Caco-2 (cell line): ENCODE measurements at regions of chr9 and their contacts with region 1.

Region 1: GRCh38 chr9:137029058-137029936 is 1.3 kb upstream of the ABCA2 start:
- DNase-seq: peak; percentile 85 to 90
- H3K4me3 ChIP-seq: peak overlapping the region; percentile 75
- H3K4me3 Mint-ChIP-seq: peak overlapping the region; percentile 74
- H3K27ac Mint-ChIP-seq: peak overlapping the region; percentile 42
- H3K4me1 ChIP-seq: peaks cover 14% of the 10 kb centered on the region
- H3K4me1 Mint-ChIP-seq: no peaks in the 10 kb centered on the region
- H3K27me3 ChIP-seq: no peaks in the 10 kb centered on the region
- H3K27me3 Mint-ChIP-seq: no peaks in the 10 kb centered on the region
- CTCF ChIP-seq: peak; percentile 86 to 97

Region 2: DNA sequence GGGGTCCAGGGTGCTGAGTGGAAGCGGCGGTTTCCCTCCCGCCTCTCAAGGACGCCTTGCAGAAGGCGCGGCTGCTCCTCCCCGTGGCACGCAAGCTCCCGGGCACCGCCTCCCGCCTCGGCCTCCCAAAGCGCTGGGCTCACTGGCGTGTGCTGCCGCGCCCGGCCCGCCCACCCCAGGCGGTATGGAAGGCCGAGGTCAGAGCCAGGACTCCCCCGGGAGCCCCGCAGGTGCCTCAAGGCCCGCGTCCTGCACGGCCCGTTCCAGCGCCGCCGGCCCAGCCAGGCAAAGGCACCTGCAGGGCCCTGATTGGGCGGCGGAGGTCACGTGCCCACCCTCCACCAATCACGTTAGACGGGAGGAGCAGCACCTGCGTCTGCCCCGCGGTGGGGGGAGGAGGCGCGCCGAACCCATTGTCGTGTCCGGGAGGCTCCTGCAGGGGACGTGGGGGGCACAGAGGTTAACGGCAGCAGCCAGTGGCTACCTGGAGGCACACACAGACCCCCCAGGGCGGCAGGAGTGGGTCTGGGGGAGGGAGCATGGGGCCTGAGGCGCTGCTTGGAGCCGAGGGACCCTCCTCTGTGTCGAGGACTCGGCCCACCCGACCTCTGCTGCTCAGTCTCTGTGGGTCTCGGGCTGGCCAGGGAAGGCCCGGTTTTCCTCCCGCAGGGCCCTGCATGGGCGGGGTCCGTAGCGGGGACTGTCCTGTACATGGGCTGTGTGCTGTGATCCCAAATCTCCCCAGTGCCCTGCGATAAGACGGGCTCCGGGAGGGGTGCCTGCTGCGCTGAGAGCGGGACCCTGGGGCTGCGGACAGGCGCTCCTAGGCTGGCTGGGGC is 79.3 kb before region 1 on chr9:
- CTCF ChIA-PET with region 1: interaction called, 42 read pairs
- POLR2A ChIA-PET with region 1: no interaction called
- intact Hi-C with region 1: loop called (anchors 2 kb)
- DNase-seq: peak; percentile 99
- H3K4me3 ChIP-seq: peak overlapping the region; percentile 60
- H3K4me3 Mint-ChIP-seq: peak overlapping the region; percentile 76
- H3K27ac Mint-ChIP-seq: peak overlapping the region; percentile 94
- H3K4me1 ChIP-seq: peaks cover 41% of the 10 kb centered on the region
- H3K4me1 Mint-ChIP-seq: no peaks in the 10 kb centered on the region
- H3K27me3 ChIP-seq: no peaks in the 10 kb centered on the region
- H3K27me3 Mint-ChIP-seq: no peaks in the 10 kb centered on the region
- CTCF ChIP-seq: peak; percentile 15 to 41

Region 3: DNA sequence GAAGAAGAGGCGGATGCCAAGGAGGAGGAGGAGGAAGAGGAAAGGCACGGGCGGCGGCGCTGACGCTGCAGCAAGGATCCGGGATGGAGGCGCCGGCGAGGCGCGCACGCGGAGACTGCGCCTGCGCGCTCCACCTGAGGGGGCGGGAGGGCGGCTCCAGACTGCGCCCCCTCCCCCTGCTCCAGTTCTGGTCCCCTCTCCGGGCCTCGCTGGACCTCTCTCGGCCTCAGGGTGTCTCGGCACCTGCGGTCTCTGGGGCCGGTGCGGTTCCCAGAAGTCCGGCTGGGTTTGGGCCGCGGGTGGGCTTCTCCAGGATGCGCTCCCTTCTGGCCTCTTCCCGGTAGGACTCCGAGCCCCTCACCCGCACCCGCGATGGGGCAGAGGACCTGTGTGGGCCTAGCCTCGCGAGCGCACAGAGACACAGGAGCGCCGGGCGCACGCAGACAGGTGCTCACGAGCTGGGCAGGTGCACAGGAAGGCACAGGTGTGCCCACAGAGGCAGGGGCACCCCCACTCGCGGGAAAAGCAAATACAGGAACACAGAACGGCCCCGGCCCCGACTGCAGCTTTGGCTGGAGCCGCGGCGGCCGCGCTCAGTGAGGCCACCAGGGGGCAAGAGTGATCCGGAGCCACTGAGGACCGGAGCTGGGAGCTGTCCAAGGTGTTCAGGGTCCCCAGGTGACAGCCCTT is 16.9 kb after region 1 on chr9 and contains the start of gene NPDC1:
- CTCF ChIA-PET with region 1: interaction called, 21 read pairs
- POLR2A ChIA-PET with region 1: no interaction called
- intact Hi-C with region 1: no loop called
- DNase-seq: peak; percentile 89 to 95
- H3K4me3 ChIP-seq: peak within 1 kb of the TSS; percentile 63
- H3K4me3 Mint-ChIP-seq: peak within 1 kb of the TSS; percentile 79
- H3K27ac Mint-ChIP-seq: no peak within 1 kb of the TSS
- H3K4me1 ChIP-seq: 0 out of 2 replicates have a peak, but pooled peaks cover 5% of the 10 kb centered on the region
- H3K4me1 Mint-ChIP-seq: no peaks in the 10 kb centered on the region
- H3K27me3 ChIP-seq: no peaks in the 10 kb centered on the region
- H3K27me3 Mint-ChIP-seq: no peaks in the 10 kb centered on the region
- CTCF ChIP-seq: peak; percentile 85 to 97
- total RNA-seq, gene NPDC1: 44.1 and 49.2 TPM in 2 replicates

Region 4: DNA sequence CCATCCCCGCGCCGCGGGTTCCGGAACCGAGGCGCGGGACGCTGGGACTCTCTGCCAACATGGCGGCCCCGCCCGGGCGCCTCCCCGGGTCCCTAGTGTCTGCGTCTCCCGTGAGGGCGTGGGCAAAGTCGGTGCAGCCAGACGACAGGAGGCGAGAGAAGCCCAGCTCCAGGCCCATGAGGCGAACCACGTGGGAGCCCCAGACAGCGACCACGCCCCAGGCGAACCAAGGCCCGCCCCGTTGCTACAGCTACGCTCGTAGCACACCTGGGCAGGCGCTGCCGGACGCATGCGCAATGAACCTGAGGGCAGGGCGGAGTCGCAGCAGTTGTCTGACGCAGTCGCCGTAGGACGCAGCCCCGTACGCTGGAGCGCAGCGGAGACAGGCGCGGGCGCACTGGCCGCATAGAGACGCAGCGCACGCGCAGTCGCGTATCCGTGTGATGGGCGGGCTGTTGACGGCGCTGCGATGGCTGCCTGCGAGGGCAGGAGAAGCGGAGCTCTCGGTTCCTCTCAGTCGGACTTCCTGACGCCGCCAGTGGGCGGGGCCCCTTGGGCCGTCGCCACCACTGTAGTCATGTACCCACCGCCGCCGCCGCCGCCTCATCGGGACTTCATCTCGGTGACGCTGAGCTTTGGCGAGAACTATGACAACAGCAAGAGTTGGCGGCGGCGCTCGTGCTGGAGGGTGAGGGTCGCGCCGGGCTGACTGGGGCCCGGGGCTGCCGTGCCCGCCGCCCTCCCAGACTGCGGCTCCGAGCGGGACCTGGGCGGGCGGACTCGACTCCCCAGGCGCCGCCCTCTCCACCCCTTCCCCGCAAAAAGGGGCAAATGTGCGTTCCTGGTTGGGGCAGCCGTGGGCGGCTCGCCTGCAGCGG is 57.5 kb after region 1 on chr9 and contains the start of gene MAN1B1:
- CTCF ChIA-PET with region 1: interaction called, 14 read pairs
- POLR2A ChIA-PET with region 1: interaction called, 6 read pairs
- intact Hi-C with region 1: no loop called
- DNase-seq: peak; percentile 99
- H3K4me3 ChIP-seq: peak within 1 kb of the TSS; percentile 75
- H3K4me3 Mint-ChIP-seq: peak within 1 kb of the TSS; percentile 100
- H3K27ac Mint-ChIP-seq: peak within 1 kb of the TSS; percentile 100
- H3K4me1 ChIP-seq: peaks cover 7% of the 10 kb centered on the region
- H3K4me1 Mint-ChIP-seq: peaks cover 15% of the 10 kb centered on the region
- H3K27me3 ChIP-seq: no peaks in the 10 kb centered on the region
- H3K27me3 Mint-ChIP-seq: no peaks in the 10 kb centered on the region
- CTCF ChIP-seq: no peak
- total RNA-seq, gene MAN1B1: 57.7 and 58.0 TPM in 2 replicates

Region 5: DNA sequence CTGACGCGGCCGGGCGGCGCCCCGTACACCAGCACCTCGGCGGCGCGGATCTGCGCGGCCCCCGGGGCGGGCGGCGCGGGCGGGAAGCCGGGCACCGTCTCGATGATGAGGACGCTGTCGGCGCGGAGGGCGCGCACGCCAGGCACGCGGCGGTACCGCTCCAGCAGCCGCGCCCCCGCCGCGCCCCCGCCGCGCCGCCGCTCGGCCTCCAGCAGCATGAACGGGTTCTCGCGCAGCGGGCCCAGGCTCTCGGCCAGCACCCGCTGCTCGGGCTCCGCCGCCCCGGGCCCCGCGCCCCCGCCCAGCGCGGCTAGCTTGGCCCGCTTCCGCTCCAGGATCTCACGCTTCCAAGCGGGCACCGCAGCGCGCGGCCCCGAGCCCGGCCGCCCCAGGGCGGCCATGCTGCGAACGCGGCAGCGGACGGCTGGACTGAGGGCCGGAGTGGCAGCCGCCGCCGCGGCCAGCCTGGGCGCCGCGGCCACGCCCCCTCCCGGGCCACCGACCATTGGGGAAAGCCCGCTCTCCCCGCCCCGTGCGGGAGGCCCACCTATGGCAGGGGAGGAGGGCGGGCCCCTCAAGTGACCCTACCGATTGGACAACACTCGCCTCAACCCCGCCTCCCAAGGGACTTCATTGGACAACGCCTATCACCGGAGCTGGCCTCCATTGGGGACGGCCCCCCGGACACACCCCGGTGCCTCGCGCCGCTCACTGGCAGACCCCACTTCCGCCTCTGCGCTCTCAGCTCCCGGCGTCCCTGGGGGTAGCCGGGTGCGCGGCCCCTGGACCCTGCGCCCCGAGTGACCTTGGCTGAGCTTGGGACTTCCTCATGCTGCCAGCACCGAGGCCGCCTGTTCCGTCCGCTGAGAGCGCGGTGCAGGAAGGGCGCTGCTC is 171.3 kb after region 1 on chr9 and contains the start of gene TPRN:
- CTCF ChIA-PET with region 1: no interaction called
- POLR2A ChIA-PET with region 1: no interaction called
- intact Hi-C with region 1: no loop called
- DNase-seq: peak; percentile 100
- H3K4me3 ChIP-seq: peak within 1 kb of the TSS; percentile 80
- H3K4me3 Mint-ChIP-seq: peak within 1 kb of the TSS; percentile 78
- H3K27ac Mint-ChIP-seq: peak within 1 kb of the TSS; percentile 64
- H3K4me1 ChIP-seq: peaks cover 37% of the 10 kb centered on the region
- H3K4me1 Mint-ChIP-seq: peaks cover under 1% of the 10 kb centered on the region
- H3K27me3 ChIP-seq: no peaks in the 10 kb centered on the region
- H3K27me3 Mint-ChIP-seq: no peaks in the 10 kb centered on the region
- CTCF ChIP-seq: no peak
- total RNA-seq, gene TPRN: 34.2 and 37.7 TPM in 2 replicates